ENCODE measurements at regions of chr17 and their contacts with region 1.

Region 1: GRCh38 chr17:38743556-38744171 is 4.5 kb downstream of the PCGF2 start:
- DNase-seq: no peak
- ATAC-seq: no peak
- H3K4me3 ChIP-seq: no peak overlapping the region
- H3K27ac ChIP-seq: no peak overlapping the region
- H3K4me1 ChIP-seq: peaks cover 33% of the 10 kb centered on the region
- H3K27me3 ChIP-seq: no peaks in the 10 kb centered on the region
- CTCF ChIP-seq: no peak

Region 2: GRCh38 chr17:38654411-38655398 is 89.0 kb before region 1 on chr17:
- CTCF ChIA-PET with region 1: no interaction called
- POLR2A ChIA-PET with region 1: no interaction called
- in situ Hi-C with region 1: no loop called
- intact Hi-C with region 1: no loop called
- DNase-seq: no peak
- ATAC-seq: no peak
- H3K4me3 ChIP-seq: no peak overlapping the region
- H3K27ac ChIP-seq: no peak overlapping the region
- H3K4me1 ChIP-seq: no peaks in the 10 kb centered on the region
- H3K27me3 ChIP-seq: no peaks in the 10 kb centered on the region
- CTCF ChIP-seq: no peak

Region 3: GRCh38 chr17:38702166-38702899 is 41.3 kb before region 1 on chr17:
- CTCF ChIA-PET with region 1: no interaction called
- POLR2A ChIA-PET with region 1: interaction called, 10 read pairs
- in situ Hi-C with region 1: no loop called
- intact Hi-C with region 1: no loop called
- DNase-seq: no peak
- ATAC-seq: peak; percentile 73
- H3K4me3 ChIP-seq: peak overlapping the region; percentile 67 to 82
- H3K27ac ChIP-seq: peak overlapping the region; percentile 90
- H3K4me1 ChIP-seq: peaks cover 10% of the 10 kb centered on the region
- H3K27me3 ChIP-seq: no peaks in the 10 kb centered on the region
- CTCF ChIP-seq: no peak

Region 4: DNA sequence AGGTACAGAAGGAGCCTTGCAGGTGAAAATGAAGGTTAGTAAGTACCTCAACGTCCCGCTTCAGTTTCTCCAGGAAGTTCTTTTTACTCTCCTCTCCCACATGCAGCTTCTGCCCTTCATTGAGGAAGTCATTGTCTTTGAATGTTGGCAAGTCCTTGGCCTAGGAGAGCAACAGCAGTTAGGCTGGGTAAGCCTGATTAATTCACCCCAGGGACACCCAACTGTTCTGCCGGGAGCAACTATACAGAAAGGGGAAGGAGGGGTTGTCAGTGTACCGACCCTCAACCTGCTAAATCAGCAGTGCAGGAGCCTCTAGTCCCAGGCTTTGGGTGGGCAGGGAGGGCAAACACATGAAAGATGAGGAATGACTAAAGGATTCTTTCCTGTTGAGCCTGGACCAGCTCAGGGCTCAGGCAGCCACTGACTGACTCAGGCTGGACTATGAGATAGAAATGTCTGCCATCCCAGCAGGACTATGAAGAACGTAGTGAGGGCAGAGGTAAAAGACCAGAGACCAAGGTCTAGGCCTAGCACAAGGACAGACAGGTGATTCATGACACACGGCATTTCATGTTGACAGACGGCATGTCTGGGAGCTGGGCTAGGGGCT is 34.1 kb after region 1 on chr17:
- CTCF ChIA-PET with region 1: no interaction called
- POLR2A ChIA-PET with region 1: no interaction called
- in situ Hi-C with region 1: no loop called
- intact Hi-C with region 1: no loop called
- DNase-seq: no peak
- ATAC-seq: no peak
- H3K4me3 ChIP-seq: no peak overlapping the region
- H3K27ac ChIP-seq: no peak overlapping the region
- H3K4me1 ChIP-seq: no peaks in the 10 kb centered on the region
- H3K27me3 ChIP-seq: no peaks in the 10 kb centered on the region
- CTCF ChIP-seq: no peak

Measured in Panc1 (cell line).